GM13977 (cell line): ENCODE measurements at regions of chr15 and their contacts with region 1.

Region 1: GRCh38 chr15:77496710-77497103 is 76.0 kb downstream of the HMG20A start:
- DNase-seq: peak; percentile 74
- CTCF ChIP-seq: peak; percentile 95

Region 2: DNA sequence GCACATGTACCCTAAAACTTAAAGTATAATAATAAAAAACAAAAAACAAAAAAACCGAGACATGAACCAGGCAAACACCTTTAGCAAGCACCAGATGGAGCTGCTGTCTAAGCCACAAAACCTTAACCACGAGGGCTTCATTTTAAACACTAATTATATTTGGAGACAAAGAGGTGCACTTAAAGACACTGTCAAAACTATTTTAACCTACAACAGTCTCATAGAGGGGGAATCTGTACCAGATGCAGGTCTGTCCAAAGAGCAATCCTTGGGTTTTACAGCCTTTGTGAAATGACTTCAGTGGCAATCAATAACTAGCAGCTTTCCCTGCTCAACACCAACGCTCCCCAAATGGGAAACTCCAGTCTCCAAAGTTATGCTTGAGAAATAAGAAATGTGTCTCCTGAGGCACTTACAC is 310.1 kb before region 1 on chr15:
- in situ Hi-C with region 1: loop called (anchors 5 kb)
- DNase-seq: peak; percentile 15
- CTCF ChIP-seq: peak; percentile 75

Region 3: GRCh38 chr15:77798151-77798835 is 301.6 kb after region 1 on chr15:
- in situ Hi-C with region 1: no loop called
- DNase-seq: no peak
- CTCF ChIP-seq: no peak